CD4-positive, alpha-beta memory T cell (primary cell): ENCODE measurements at regions of chr18 and their contacts with region 1.

Region 1: GRCh38 chr18:31942999-31943865 is at the start of gene TRAPPC8:
- DNase-seq: peak; percentile 92 to 96 (median 95)
- H3K4me3 ChIP-seq: peak within 1 kb of the TSS; percentile 83 to 99
- H3K4me3 Mint-ChIP-seq: peak within 1 kb of the TSS; percentile 98 to 100 (median 99)
- H3K27ac ChIP-seq: peak within 1 kb of the TSS; percentile 95
- H3K27ac Mint-ChIP-seq: peak within 1 kb of the TSS; percentile 98 to 100 (median 99)
- H3K4me1 ChIP-seq: peaks cover 50% of the 10 kb centered on the region
- H3K4me1 Mint-ChIP-seq: peaks cover 32 to 64% (median 46%) of the 10 kb centered on the region in 4 donors
- H3K27me3 ChIP-seq: no peaks in the 10 kb centered on the region
- H3K27me3 Mint-ChIP-seq: no peaks in the 10 kb centered on the region
- total RNA-seq, gene TRAPPC8: 59.4 to 66.3 TPM

Region 2: GRCh38 chr18:31146809-31147208 is 796.4 kb before region 1 on chr18:
- CTCF ChIA-PET with region 1: no interaction called
- POLR2A ChIA-PET with region 1: no interaction called
- intact Hi-C with region 1: no loop called
- DNase-seq: no peak
- H3K4me3 ChIP-seq: no peak overlapping the region
- H3K4me3 Mint-ChIP-seq: no peak overlapping the region
- H3K27ac ChIP-seq: no peak overlapping the region
- H3K27ac Mint-ChIP-seq: no peak overlapping the region
- H3K4me1 ChIP-seq: no peaks in the 10 kb centered on the region
- H3K4me1 Mint-ChIP-seq: no peaks in the 10 kb centered on the region
- H3K27me3 ChIP-seq: no peaks in the 10 kb centered on the region
- H3K27me3 Mint-ChIP-seq: no peaks in the 10 kb centered on the region

Region 3: GRCh38 chr18:31685097-31686082 is 257.8 kb before region 1 on chr18:
- CTCF ChIA-PET with region 1: no interaction called
- POLR2A ChIA-PET with region 1: no interaction called
- intact Hi-C with region 1: loop called (anchors 1 kb)
- DNase-seq: peak; percentile 21 to 57 (median 31)
- H3K4me3 ChIP-seq: peak overlapping the region in 1 of 2 donors; percentile 39
- H3K4me3 Mint-ChIP-seq: peak overlapping the region; percentile 81 to 91 (median 86)
- H3K27ac ChIP-seq: no peak overlapping the region
- H3K27ac Mint-ChIP-seq: peak overlapping the region in 3 of 7 donors; percentile 30 to 77 (median 68)
- H3K4me1 ChIP-seq: no peaks in the 10 kb centered on the region
- H3K4me1 Mint-ChIP-seq: peaks cover 3 to 18% (median 11%) of the 10 kb centered on the region in 4 donors
- H3K27me3 ChIP-seq: peaks cover 5% of the 10 kb centered on the region
- H3K27me3 Mint-ChIP-seq: peaks cover 16 to 17% of the 10 kb centered on the region in 2 donors

Region 4: GRCh38 chr18:31954349-31954748 is 11.1 kb after region 1 on chr18:
- CTCF ChIA-PET with region 1: interaction called, 6 read pairs
- POLR2A ChIA-PET with region 1: interaction called, 6 read pairs
- intact Hi-C with region 1: loop called (anchors 1 kb)
- DNase-seq: no peak
- H3K4me3 ChIP-seq: no peak overlapping the region
- H3K4me3 Mint-ChIP-seq: no peak overlapping the region
- H3K27ac ChIP-seq: no peak overlapping the region
- H3K27ac Mint-ChIP-seq: no peak overlapping the region
- H3K4me1 ChIP-seq: no peaks in the 10 kb centered on the region
- H3K4me1 Mint-ChIP-seq: peaks cover 0 to 1% (median 0%) of the 10 kb centered on the region in 4 donors
- H3K27me3 ChIP-seq: no peaks in the 10 kb centered on the region
- H3K27me3 Mint-ChIP-seq: peaks cover 2 to 6% of the 10 kb centered on the region in 2 donors

Region 5: DNA sequence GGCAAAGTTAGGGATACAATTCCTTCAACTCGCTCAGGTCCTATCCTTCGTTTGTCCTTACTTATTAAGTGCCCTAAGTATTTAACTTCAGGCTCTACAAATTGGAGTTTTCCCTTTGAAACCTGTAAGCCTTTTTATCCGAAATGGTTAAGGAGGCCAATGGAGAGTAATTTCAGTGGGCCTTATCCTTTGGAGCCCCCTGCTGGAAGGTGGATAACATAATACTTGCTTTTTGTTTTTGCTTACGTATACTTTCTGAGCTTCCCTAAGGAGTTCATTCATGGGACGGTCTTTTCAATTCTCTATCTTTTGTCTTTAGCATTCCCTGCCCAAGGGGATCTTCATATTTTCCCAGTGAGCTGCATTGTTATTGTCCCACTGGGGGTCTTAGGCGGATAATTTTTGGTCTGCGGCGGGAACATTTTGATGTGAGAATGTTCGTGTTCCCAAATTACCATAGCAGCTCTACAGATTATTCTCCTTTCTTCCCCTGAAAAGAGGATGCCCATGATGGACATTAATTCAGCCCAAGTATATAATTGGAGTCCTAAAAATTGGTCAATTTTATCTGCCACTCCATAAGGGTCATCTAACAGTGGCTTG is 34.1 kb after region 1 on chr18:
- CTCF ChIA-PET with region 1: interaction called, 29 read pairs
- POLR2A ChIA-PET with region 1: interaction called, 6 read pairs
- intact Hi-C with region 1: loop called (anchors 1 kb)
- DNase-seq: peak in 4 of 5 donors; percentile 41 to 49 (median 46)
- H3K4me3 ChIP-seq: no peak overlapping the region
- H3K4me3 Mint-ChIP-seq: no peak overlapping the region
- H3K27ac ChIP-seq: no peak overlapping the region
- H3K27ac Mint-ChIP-seq: no peak overlapping the region
- H3K4me1 ChIP-seq: no peaks in the 10 kb centered on the region
- H3K4me1 Mint-ChIP-seq: peaks cover 2 to 9% (median 4%) of the 10 kb centered on the region in 4 donors
- H3K27me3 ChIP-seq: no peaks in the 10 kb centered on the region
- H3K27me3 Mint-ChIP-seq: no peaks in the 10 kb centered on the region

Region 6: DNA sequence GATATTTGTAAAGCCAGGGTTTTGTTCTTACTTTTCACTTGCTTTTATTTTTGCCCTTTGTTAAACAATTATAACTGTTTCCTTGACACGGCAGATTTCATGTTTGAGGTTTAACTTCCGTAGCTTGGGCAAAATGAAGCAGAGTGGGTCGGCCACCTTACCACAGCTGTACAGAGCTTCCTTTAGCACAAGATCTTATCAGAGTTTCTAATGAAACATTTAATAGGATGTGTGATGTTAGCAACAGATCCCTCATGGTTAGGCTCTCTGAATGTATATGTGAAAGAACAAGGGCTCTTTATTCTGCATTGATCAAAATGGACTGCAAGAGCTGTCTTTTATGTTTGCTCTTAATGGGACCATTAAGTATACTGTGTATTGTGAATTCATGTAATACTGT is 97.7 kb after region 1 on chr18:
- CTCF ChIA-PET with region 1: interaction called, 5 read pairs
- POLR2A ChIA-PET with region 1: interaction called, 11 read pairs
- intact Hi-C with region 1: no loop called
- DNase-seq: peak; percentile 74 to 78 (median 75)
- H3K4me3 ChIP-seq: no peak overlapping the region
- H3K4me3 Mint-ChIP-seq: peak overlapping the region; percentile 55 to 84 (median 70)
- H3K27ac ChIP-seq: peak overlapping the region; percentile 21
- H3K27ac Mint-ChIP-seq: peak overlapping the region; percentile 61 to 92 (median 87)
- H3K4me1 ChIP-seq: peaks cover 75% of the 10 kb centered on the region
- H3K4me1 Mint-ChIP-seq: peaks cover 48 to 75% (median 58%) of the 10 kb centered on the region in 4 donors
- H3K27me3 ChIP-seq: no peaks in the 10 kb centered on the region
- H3K27me3 Mint-ChIP-seq: no peaks in the 10 kb centered on the region

Region 7: DNA sequence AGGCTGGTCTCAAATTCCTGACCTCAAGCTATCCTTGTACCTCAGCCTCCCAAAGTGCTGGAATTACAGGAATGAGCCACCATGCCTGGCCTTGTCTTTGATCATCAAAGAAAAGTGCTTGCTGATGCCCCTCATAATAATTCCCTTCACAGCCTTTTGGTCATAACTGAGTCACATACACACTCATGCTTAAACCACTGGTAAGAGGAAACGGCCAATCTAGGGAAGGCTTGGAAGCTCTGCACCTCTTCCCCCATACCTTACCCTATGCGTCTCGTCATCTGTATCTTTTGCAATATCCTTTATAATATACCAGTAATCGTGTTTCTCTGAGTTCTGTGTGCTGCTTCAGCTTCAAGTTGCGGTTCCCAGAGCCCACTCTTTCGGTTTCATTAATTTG is 143.6 kb after region 1 on chr18:
- CTCF ChIA-PET with region 1: interaction called, 15 read pairs
- POLR2A ChIA-PET with region 1: interaction called, 44 read pairs
- intact Hi-C with region 1: loop called (anchors 1 kb)
- DNase-seq: no peak
- H3K4me3 ChIP-seq: no peak overlapping the region
- H3K4me3 Mint-ChIP-seq: peak overlapping the region in 2 of 8 donors; percentile 16 to 29
- H3K27ac ChIP-seq: no peak overlapping the region
- H3K27ac Mint-ChIP-seq: peak overlapping the region in 5 of 7 donors; percentile 13 to 95 (median 69)
- H3K4me1 ChIP-seq: peaks cover 44% of the 10 kb centered on the region
- H3K4me1 Mint-ChIP-seq: peaks cover 33 to 53% (median 42%) of the 10 kb centered on the region in 4 donors
- H3K27me3 ChIP-seq: no peaks in the 10 kb centered on the region
- H3K27me3 Mint-ChIP-seq: no peaks in the 10 kb centered on the region

Region 8: DNA sequence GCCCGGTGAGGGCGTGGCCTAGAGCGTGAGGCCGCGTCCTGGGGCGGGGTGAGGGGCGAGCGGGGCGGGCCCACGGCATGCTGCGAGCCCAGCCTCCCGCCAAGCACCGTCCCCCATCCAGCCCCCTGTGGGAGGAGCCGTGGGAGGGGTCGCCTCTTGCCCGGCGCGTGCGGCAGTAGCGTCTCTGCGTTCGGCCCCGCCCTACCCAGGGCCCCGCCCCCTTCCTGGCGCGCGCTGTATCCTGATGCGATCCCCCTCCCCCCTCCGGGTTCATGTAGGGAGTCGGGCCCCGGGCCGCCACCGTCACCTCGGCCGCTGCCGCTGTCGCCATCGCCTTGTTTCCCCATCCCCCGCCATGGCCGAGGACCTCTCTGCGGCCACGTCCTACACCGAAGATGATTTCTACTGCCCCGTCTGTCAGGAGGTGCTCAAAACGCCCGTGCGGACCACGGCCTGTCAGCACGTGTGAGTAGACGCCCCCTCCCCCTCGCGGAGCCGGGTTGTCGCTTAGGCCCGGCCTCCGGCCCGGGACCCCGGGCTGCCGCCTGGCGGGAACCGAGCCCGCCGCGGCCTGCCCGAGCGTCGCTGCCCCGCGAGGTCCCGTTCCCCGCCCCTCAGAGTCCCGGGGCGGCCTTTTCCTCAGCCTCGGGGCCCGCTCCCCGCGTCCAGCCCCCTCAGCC is 149.3 kb after region 1 on chr18:
- CTCF ChIA-PET with region 1: interaction called, 9 read pairs
- POLR2A ChIA-PET with region 1: interaction called, 44 read pairs
- intact Hi-C with region 1: loop called (anchors 1 kb)
- DNase-seq: peak; percentile 98 to 99 (median 99)
- H3K4me3 ChIP-seq: peak overlapping the region; percentile 91 to 96
- H3K4me3 Mint-ChIP-seq: peak overlapping the region; percentile 95 to 99 (median 98)
- H3K27ac ChIP-seq: peak overlapping the region; percentile 98
- H3K27ac Mint-ChIP-seq: peak overlapping the region; percentile 98 to 99 (median 98)
- H3K4me1 ChIP-seq: peaks cover 40% of the 10 kb centered on the region
- H3K4me1 Mint-ChIP-seq: peaks cover 28 to 55% (median 41%) of the 10 kb centered on the region in 4 donors
- H3K27me3 ChIP-seq: no peaks in the 10 kb centered on the region
- H3K27me3 Mint-ChIP-seq: no peaks in the 10 kb centered on the region